Posterior cingulate gyrus (tissue), 11 donors: ENCODE measurements at regions of chr15 and their contacts with region 1.

Region 1: GRCh38 chr15:78000091-78000926 is 77.2 kb downstream of the TBC1D2B start:
- DNase-seq: peak in 7 of 10 donors; percentile 8 to 88 (median 46)

Region 2: DNA sequence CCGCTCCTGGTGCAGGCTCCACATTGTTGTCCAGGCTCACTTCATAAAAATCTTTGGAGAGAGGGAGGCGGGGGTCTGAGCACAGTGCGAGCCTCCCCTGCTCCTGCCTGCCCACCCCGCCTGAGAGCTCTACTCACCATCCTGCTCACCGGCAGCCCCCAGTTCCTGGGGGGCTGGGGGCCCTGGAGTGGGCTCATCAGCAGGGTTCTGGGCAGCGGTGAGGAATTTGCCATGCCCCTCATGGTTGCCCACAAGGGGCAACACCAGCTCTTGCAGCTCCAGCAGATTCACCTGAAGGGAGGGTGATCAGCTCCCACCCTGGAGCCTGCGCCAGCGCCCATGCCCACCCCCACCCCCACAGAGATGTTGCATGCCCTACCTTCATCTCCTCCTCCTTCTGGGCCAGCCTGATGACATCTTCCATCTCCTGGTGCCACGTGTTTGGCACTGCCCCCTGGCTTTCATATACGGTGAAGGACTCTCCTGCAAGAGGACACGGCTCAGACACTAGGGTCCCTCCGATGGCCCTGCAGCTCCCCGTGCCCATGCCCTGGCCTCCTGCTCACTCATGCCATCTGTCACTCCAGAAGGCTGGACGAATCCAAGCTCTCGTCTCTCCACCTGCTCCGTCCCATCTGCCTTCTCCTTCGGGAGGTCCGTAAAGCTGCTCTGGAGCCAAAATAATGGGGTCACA is 84.9 kb before region 1 on chr15:
- intact Hi-C with region 1: no loop called
- DNase-seq: peak in 2 of 10 donors; percentile 14 to 68

Region 3: GRCh38 chr15:77966540-77967290 is 33.6 kb before region 1 on chr15:
- intact Hi-C with region 1: loop called (anchors 5 kb)
- DNase-seq: peak in 9 of 10 donors; percentile 50 to 94 (median 70)

Region 4: DNA sequence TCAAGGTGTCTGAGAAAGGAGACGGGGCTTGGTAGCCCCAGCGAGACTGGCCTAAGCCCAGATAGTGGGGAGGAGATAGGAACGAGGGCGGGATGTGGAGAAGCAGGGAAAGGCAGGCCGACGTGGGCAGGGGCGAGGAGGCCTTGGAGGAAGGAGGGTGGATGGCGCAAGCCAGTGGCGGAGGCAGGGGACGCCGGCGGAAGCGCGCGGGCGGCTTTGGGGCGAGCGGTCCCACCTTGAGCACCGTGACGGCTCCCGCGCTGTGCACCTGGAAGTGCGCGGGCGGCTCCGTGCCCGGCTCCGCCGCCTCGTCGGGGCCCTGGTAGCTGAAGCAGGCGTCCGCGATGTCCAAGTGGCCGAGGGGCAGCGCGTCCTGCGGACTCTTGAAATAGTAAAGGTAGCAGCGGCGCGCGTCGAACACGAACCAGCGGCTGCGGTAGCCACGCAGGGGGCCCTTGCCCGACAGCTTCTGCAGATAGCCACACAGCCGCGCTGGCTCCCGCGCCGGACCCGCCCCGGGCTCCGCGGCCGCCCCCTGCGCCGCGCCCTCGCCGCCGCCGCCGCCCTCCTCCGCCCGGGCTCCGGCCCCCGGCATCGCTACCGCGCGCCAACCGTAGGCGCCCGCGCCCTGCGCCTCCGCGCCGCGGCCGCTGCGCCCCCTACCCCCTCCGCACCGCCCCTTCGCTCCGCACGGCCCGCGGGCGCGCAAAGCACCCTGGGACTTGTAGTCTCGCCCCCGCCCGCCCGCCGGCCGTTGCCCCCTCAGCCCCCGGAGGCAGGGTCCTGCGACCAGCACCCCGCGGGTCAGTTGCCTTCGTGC is 77.0 kb after region 1 on chr15 and contains the start of gene TBC1D2B:
- intact Hi-C with region 1: loop called (anchors 10 kb)
- DNase-seq: peak; percentile 50 to 94 (median 66)

Region 5: DNA sequence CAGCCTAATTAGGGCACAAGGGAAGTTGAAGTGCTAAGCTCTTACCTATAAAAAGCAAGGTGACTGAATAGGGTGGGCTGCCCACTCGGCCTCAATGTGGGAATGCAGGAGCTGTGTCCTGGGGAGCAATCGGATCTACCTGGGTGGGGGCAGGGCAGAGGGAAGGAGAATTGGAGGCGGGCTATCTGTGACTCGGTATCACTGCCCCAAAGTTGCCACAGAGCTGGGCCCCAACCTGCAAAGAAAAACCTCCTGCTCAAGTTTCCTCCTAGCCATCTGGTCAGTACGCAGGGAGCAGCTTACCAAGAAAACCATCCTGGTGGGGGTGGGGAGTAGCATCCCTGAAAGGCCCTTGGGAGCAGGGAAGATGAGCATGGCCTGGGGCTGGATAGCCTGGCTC is 120.2 kb after region 1 on chr15:
- intact Hi-C with region 1: no loop called
- DNase-seq: peak in 1 of 10 donors; percentile 34